GM13977 (cell line): ENCODE measurements at regions of chr14 and their contacts with region 1.

Region 1: DNA sequence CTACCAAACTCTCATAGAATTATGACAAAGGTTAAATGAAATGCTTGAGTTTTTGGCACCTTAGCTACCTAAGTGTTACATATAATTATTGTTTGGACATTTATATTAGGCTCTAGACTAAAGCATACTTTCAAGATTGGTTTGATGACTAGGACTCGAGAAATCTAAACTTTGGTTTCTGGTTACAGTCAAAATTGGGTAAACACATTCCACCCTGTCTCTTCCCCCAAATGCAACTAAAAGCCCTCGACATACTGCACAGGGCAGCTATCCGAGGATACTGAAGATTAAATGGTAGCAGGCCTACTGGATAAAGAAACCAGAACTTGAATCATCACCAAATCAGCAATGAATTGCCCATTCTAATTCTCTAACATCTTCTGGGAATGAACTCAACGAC is 369.1 kb downstream of the PRKD1 start:
- DNase-seq: no peak
- CTCF ChIP-seq: no peak

Region 2: DNA sequence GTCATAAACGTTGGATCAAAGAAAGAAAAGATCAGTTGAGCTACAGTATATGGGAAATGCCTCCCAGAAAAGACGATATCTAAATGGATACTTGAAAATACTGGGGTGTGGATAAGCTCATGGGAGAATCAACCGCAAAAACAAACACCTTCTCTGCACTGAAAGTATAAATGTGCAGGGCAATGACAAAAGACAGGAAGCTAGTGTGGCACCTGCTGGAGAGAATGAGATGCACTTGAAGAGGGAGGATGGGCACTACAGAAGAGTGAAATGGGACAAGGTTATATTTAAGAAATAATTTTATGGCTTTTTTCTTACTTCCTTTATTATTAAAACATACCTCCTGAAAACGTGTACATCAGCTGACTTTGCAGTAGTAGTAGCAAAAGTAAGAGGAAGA is 215.5 kb after region 1 on chr14:
- in situ Hi-C with region 1: no loop called
- DNase-seq: no peak
- CTCF ChIP-seq: no peak

Region 3: DNA sequence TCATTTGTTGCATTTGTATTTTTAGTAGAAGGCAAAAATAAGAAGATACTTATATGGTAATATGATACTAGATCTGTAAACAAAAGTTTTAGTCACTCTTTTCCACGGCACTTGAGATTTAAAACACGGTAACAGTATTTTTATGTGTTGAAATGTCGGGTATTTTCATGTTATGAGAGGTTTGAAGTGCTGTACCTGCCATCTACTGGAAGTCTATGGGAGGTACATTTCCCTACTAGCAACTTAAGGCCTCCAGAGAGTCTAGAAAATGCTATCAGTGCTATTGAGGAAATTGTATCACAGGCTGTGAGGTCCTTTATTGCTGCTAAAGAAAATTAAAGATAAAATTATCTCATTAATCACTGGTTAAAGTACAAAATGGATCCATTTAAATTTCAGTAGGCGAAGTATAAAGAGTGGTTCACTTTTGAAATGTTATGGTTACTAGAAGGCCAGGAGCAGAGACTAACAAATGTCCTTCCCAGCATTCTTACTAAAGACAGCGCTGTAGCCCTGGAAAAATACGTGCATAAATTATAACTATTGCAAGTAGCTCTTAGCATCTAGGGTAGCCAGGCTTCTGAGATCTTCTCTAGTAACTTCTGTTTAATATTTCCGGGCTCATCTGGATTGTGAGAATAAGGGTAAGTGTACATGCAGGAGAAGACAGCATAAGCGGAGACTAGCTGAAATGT is 446.7 kb after region 1 on chr14:
- in situ Hi-C with region 1: loop called (anchors 25 kb)
- DNase-seq: peak; percentile 10
- CTCF ChIP-seq: peak; percentile 32

Region 4: GRCh38 chr14:30162066-30162465 is 603.5 kb after region 1 on chr14:
- in situ Hi-C with region 1: no loop called
- DNase-seq: no peak
- CTCF ChIP-seq: no peak